ENCODE measurements at regions of chr5 and their contacts with region 1.

Region 1: GRCh38 chr5:150656191-150657132 is 4.6 kb upstream of the MYOZ3 start:
- DNase-seq: peak in 1 of 2 donors; percentile 95
- H3K4me3 ChIP-seq: peak overlapping the region; percentile 27
- CTCF ChIP-seq: no peak
- POLR2A ChIP-seq: no peak

Region 2: DNA sequence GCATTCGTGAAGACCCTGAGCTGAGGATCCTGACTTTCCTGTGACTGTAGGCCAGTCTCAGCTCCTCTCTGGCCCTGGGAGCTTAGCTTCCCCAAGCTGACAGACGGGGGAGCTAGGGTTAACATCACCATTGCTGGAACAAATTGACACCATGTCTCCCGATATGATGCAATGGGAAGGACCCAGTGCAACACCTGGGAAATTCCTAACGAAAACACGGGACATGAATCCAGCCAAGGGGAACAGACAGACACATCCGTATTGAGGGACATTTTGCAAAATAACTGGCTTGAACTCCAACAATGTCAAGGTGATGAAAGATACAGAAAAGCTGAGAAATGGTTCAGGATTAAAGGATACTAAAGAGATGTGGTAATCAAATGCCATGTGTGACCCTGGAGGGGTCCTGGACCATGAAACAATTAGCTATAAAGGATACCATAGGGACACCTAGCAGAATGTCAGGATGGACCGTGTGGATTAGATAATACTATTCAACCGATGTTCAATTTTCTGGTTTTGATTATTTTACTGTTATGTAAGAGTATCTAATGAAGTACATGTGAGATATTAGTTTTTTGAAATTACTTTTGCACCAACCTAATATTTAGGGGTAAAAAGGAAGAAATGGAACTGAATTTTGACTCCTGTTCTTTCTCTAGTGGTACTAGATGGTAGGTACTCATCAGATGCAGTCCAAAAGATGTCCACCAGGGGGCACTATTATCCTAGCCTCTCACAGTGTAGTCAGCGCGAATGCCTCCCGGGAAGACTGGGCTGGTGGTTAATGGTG is 95.9 kb before region 1 on chr5:
- intact Hi-C with region 1: loop called (anchors 5 kb)
- DNase-seq: peak; percentile 93 to 96
- H3K4me3 ChIP-seq: no peak overlapping the region
- CTCF ChIP-seq: no peak
- POLR2A ChIP-seq: no peak

Region 3: DNA sequence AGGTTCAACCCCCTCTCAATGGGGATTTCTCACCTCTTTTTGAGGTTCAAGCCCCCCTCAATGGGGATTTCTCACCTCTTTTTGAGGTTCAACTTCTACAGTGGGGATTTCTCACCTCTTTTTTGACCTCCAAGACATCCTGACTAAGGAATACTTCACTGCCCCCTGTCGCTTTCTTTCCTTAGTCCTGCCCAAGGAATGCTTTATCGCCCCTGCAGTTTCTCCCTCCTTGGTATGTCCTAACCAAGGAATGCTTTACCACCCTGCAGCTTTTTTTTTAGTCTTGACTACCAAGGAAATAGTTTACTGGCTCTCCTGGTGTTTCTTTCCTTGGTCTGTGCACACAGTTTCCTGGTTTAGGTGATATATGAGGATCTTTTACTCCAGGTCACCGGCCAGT is 180.2 kb after region 1 on chr5:
- intact Hi-C with region 1: no loop called
- DNase-seq: no peak
- H3K4me3 ChIP-seq: no peak overlapping the region
- CTCF ChIP-seq: no peak
- POLR2A ChIP-seq: no peak

Region 4: GRCh38 chr5:151068433-151069197 is 412.2 kb after region 1 on chr5:
- intact Hi-C with region 1: no loop called
- DNase-seq: no peak
- H3K4me3 ChIP-seq: no peak overlapping the region
- CTCF ChIP-seq: no peak
- POLR2A ChIP-seq: no peak